ENCODE measurements at regions of chr17 and their contacts with region 1.

Region 1: GRCh38 chr17:47229535-47230443 is 20.6 kb downstream of the MYL4 start:
- DNase-seq: peak; percentile 71 to 77
- ATAC-seq: peak; percentile 89
- H3K4me3 ChIP-seq: peak overlapping the region; percentile 8 to 39 (median 26)
- H3K27ac ChIP-seq: peak overlapping the region in 2 of 4 donors; percentile 39 to 42
- H3K4me1 ChIP-seq: peaks cover 11 to 13% of the 10 kb centered on the region in 2 donors
- H3K27me3 ChIP-seq: no peaks in the 10 kb centered on the region
- CTCF ChIP-seq: peak; percentile 92 to 98 (median 97)
- POLR2A ChIP-seq: no peak

Region 2: GRCh38 chr17:47057830-47058229 is 172.0 kb before region 1 on chr17:
- in situ Hi-C with region 1: no loop called
- intact Hi-C with region 1: no loop called
- DNase-seq: no peak
- ATAC-seq: no peak
- H3K4me3 ChIP-seq: no peak overlapping the region
- H3K27ac ChIP-seq: no peak overlapping the region
- H3K4me1 ChIP-seq: no peaks in the 10 kb centered on the region
- H3K27me3 ChIP-seq: no peaks in the 10 kb centered on the region
- CTCF ChIP-seq: no peak
- POLR2A ChIP-seq: no peak

Region 3: DNA sequence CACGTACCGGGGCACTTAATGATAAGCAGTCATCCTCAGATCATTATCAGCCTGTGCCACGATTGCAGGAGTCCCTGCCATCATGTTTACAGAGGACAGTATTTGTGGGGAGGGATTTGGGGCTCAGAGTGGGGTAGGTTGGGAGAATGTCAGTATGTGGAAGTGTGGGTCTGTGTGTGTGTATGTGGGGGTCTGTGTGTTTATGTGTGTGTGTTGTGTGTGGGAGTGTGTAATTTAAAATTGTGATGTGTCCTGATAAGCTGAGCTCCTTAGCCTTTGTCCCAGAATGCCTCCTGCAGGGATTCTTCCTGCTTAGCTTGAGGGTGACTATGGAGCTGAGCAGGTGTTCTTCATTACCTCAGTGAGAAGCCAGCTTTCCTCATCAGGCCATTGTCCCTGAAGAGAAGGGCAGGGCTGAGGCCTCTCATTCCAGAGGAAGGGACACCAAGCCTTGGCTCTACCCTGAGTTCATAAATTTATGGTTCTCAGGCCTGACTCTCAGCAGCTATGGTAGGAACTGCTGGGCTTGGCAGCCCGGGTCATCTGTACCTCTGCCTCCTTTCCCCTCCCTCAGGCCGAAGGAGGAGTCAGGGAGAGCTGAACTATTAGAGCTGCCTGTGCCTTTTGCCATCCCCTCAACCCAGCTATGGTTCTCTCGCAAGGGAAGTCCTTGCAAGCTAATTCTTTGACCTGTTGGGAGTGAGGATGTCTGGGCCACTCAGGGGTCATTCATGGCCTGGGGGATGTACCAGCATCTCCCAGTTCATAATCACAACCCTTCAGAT is 80.6 kb after region 1 on chr17:
- in situ Hi-C with region 1: loop called (anchors 5 kb)
- intact Hi-C with region 1: loop called (anchors 1 kb)
- DNase-seq: no peak
- ATAC-seq: no peak
- H3K4me3 ChIP-seq: no peak overlapping the region
- H3K27ac ChIP-seq: no peak overlapping the region
- H3K4me1 ChIP-seq: no peaks in the 10 kb centered on the region
- H3K27me3 ChIP-seq: no peaks in the 10 kb centered on the region
- CTCF ChIP-seq: no peak
- POLR2A ChIP-seq: no peak

Region 4: GRCh38 chr17:47315451-47316266 is 85.9 kb after region 1 on chr17:
- in situ Hi-C with region 1: loop called (anchors 5 kb)
- intact Hi-C with region 1: loop called (anchors 1 kb)
- DNase-seq: no peak
- ATAC-seq: peak; percentile 66 to 70
- H3K4me3 ChIP-seq: no peak overlapping the region
- H3K27ac ChIP-seq: peak overlapping the region in 3 of 4 donors; percentile 4 to 27 (median 18)
- H3K4me1 ChIP-seq: no peaks in the 10 kb centered on the region
- H3K27me3 ChIP-seq: no peaks in the 10 kb centered on the region
- CTCF ChIP-seq: peak; percentile 51 to 76 (median 66)
- POLR2A ChIP-seq: no peak

Region 5: DNA sequence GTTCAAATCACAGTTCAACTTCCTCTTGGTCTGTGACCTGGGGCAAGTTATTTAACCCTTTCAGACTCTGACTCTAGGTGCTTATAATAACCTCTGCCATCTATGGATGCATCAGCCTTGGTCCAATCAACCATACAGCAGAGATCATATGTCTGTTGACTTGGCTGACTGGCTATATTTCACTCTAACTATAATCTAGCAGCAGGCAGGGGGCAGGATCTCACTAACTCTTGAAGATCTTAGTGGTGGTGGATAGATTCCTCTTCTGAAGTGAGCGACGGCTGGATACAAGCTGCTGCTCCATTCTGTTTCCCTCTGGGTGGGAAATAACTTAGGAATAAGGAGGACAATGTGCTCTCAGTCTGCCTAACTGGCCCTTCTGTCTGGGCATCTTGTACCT is 1053.6 kb after region 1 on chr17:
- in situ Hi-C with region 1: no loop called
- intact Hi-C with region 1: no loop called
- DNase-seq: no peak
- ATAC-seq: no peak
- H3K4me3 ChIP-seq: no peak overlapping the region
- H3K27ac ChIP-seq: no peak overlapping the region
- H3K4me1 ChIP-seq: peaks cover 0 to 10% of the 10 kb centered on the region in 2 donors
- H3K27me3 ChIP-seq: no peaks in the 10 kb centered on the region
- CTCF ChIP-seq: no peak
- POLR2A ChIP-seq: no peak